ENCODE measurements at regions of chr3 and their contacts with region 1.

Region 1: GRCh38 chr3:115783938-115784738 is 160.8 kb downstream of the GAP43 start:
- DNase-seq: peak; percentile 93
- ATAC-seq: peak; percentile 89
- H3K4me3 ChIP-seq: peak overlapping the region; percentile 64
- H3K27ac ChIP-seq: peak overlapping the region; percentile 79
- H3K4me1 ChIP-seq: peaks cover 5% of the 10 kb centered on the region
- H3K27me3 ChIP-seq: no peaks in the 10 kb centered on the region
- CTCF ChIP-seq: peak; percentile 98
- POLR2A ChIP-seq: peak; percentile 79
- RAD21 ChIP-seq: peak; percentile 78

Region 2: DNA sequence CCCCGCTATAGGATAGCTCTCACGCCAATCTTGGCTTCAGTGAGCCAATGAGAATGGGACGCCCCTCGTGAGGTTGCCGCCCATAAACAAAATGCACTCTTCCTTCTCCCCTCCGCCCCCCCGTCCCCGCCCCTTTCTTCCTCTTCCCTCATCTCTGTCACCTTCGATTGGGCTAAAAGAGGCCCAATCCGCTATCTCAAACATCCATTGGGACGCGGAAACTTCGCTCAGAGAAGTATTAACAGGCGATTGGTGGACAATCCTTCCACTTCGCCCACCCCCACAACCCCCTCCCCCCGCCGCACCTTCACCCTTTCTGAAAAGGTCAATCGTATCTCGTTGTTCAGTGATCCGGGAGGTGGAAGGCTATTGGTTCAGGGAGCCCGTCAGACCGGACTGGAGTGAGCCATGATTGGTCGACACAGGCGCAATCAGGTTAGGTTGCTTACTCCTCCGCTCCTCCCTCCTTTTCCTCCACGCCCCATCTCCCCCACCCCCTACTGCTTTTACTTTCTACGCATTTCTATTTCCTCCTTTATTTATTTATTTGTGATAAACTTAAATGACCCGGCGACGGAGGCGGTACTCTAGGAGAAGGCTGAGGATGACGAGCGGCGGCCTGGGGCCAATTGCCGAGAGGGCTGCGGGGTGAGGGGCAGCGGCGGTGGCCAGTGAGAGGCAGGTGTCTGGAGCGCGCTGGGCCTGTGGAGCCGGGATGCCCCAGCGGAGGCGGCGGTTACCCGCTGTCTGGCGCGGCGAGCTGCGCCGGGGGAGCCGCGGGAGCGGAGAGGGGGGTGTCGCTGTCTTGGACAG is 636.6 kb before region 1 on chr3:
- CTCF ChIA-PET with region 1: interaction called, 3 read pairs
- POLR2A ChIA-PET with region 1: no interaction called
- dilution Hi-C with region 1: no loop called
- in situ Hi-C with region 1: no loop called
- intact Hi-C with region 1: loop called (anchors 1 kb)
- DNase-seq: peak; percentile 100
- ATAC-seq: peak; percentile 84
- H3K4me3 ChIP-seq: peak overlapping the region; percentile 82
- H3K27ac ChIP-seq: peak overlapping the region; percentile 81
- H3K4me1 ChIP-seq: no peaks in the 10 kb centered on the region
- H3K27me3 ChIP-seq: no peaks in the 10 kb centered on the region
- CTCF ChIP-seq: no peak
- POLR2A ChIP-seq: peak; percentile 89
- RAD21 ChIP-seq: no peak; the same call in 1 of the 2 replicates

Region 3: DNA sequence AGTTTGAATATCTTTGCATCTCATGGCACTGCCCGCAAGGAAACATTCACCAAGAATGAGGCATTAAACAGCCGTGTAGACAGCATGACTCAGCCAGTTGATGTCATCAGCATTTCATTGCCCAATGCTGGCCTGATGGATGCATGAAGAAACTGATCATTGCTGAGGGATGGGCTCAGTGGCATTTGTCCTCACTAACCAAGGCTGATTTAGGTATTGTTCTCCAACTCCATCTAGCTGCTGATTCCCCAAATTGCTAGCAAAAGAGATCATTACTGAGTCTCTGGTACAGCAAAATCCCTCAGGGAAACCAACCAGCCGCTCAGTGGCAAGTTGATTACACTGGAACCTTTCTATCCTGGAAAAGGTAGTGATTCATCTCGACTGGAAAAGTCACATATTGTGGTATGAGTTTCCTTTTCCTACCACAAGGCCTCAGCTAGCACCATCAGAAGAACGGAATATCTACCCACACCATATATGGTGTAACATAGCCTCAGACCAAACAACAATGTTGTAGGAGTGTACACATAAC is 347.3 kb before region 1 on chr3:
- CTCF ChIA-PET with region 1: no interaction called
- POLR2A ChIA-PET with region 1: no interaction called
- dilution Hi-C with region 1: no loop called
- in situ Hi-C with region 1: no loop called
- intact Hi-C with region 1: loop called (anchors 10 kb)
- DNase-seq: peak; percentile 93
- ATAC-seq: peak; percentile 92
- H3K4me3 ChIP-seq: no peak overlapping the region
- H3K27ac ChIP-seq: no peak overlapping the region
- H3K4me1 ChIP-seq: peaks cover 3% of the 10 kb centered on the region; the same call in 1 of the 2 replicates
- H3K27me3 ChIP-seq: no peaks in the 10 kb centered on the region
- CTCF ChIP-seq: peak; percentile 48
- POLR2A ChIP-seq: no peak
- RAD21 ChIP-seq: peak; percentile 58

Region 4: GRCh38 chr3:115692887-115693524 is 91.1 kb before region 1 on chr3:
- CTCF ChIA-PET with region 1: interaction called, 4 read pairs
- POLR2A ChIA-PET with region 1: no interaction called
- dilution Hi-C with region 1: no loop called
- in situ Hi-C with region 1: no loop called
- intact Hi-C with region 1: loop called (anchors 1 kb)
- DNase-seq: peak; percentile 72
- ATAC-seq: peak; percentile 97
- H3K4me3 ChIP-seq: no peak overlapping the region
- H3K27ac ChIP-seq: no peak overlapping the region
- H3K4me1 ChIP-seq: peaks cover 5% of the 10 kb centered on the region
- H3K27me3 ChIP-seq: no peaks in the 10 kb centered on the region
- CTCF ChIP-seq: peak; percentile 86
- POLR2A ChIP-seq: peak; percentile 23; the same call in 1 of the 2 replicates
- RAD21 ChIP-seq: peak; percentile 98

Region 5: DNA sequence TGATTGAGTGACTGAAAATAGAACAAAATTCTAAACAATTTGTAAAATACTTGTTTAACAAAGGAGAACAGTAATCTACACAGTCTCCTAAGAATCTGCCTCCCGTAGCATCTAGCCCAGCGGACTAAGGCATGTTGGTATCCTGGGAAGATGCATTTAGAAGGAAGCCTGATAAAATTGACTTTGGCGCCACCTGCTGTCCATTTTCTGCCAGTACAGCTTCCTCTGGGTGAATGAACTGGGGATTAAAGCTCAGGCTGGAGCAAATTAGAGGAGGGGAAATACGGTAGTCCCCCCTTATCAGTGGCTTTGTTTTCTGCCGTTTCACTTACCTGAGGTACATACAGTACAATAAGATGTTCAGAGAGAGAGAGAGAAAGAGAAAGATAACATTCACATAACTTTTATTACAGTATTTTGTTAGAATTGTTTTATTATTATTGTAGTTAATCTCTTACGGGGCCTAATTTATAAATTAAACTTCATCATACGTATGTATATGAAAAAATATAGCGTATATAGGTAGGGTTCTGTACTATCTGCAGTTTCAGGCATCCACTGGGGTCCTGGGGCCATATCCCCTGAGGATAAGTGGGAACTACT is 30.7 kb after region 1 on chr3:
- CTCF ChIA-PET with region 1: interaction called, 7 read pairs
- POLR2A ChIA-PET with region 1: no interaction called
- dilution Hi-C with region 1: no loop called
- in situ Hi-C with region 1: no loop called
- intact Hi-C with region 1: loop called (anchors 1 kb)
- DNase-seq: peak; percentile 76
- ATAC-seq: peak; percentile 95
- H3K4me3 ChIP-seq: no peak overlapping the region
- H3K27ac ChIP-seq: no peak overlapping the region
- H3K4me1 ChIP-seq: no peaks in the 10 kb centered on the region
- H3K27me3 ChIP-seq: no peaks in the 10 kb centered on the region
- CTCF ChIP-seq: peak; percentile 88
- POLR2A ChIP-seq: peak; percentile 62
- RAD21 ChIP-seq: peak; percentile 94

Measured in IMR-90 (cell line).